PC-3 (cell line): ENCODE measurements at regions of chr12 and their contacts with region 1.

Region 1: GRCh38 chr12:89352492-89353187 is at the start of gene DUSP6:
- DNase-seq: peak; percentile 99
- ATAC-seq: peak; percentile 67
- H3K4me3 ChIP-seq: peak within 1 kb of the TSS; percentile 98
- H3K27ac ChIP-seq: peak within 1 kb of the TSS; percentile 93
- H3K4me1 ChIP-seq: peaks cover 39% of the 10 kb centered on the region
- H3K27me3 ChIP-seq: no peaks in the 10 kb centered on the region
- CTCF ChIP-seq: no peak
- total RNA-seq, gene DUSP6: 184 and 244 TPM in 2 replicates

Region 2: GRCh38 chr12:89179983-89180382 is 172.7 kb before region 1 on chr12:
- CTCF ChIA-PET with region 1: no interaction called
- POLR2A ChIA-PET with region 1: interaction called, 10 read pairs
- intact Hi-C with region 1: no loop called
- DNase-seq: peak; percentile 87
- ATAC-seq: peak; percentile 20; the same call in 1 of the 2 replicates
- H3K4me3 ChIP-seq: no peak overlapping the region
- H3K27ac ChIP-seq: no peak overlapping the region
- H3K4me1 ChIP-seq: peaks cover 37% of the 10 kb centered on the region
- H3K27me3 ChIP-seq: no peaks in the 10 kb centered on the region
- CTCF ChIP-seq: no peak

Region 3: DNA sequence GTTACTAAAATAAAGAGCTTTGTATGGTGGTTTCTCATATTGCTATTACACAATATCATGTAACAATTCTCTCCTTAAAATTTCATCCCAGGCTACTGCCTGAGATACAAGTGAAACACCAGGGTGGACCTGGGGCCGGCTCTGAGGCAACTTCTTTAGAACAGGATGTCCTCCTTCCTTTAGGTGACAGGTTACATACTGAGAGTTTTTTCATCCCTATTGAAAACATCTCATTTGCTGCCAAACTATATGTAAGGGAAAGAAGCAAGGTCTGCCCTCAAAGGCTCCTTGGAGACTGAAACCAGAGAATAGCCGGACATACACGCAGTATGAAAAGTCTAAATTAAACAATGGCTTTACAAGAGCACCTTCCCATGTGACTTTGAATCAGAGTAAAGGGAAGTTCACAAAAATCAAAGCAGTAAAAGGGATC is 140.3 kb before region 1 on chr12:
- CTCF ChIA-PET with region 1: no interaction called
- POLR2A ChIA-PET with region 1: no interaction called
- intact Hi-C with region 1: loop called (anchors 2 kb)
- DNase-seq: peak; percentile 64
- ATAC-seq: peak; percentile 91
- H3K4me3 ChIP-seq: no peak overlapping the region
- H3K27ac ChIP-seq: peak overlapping the region; percentile 59
- H3K4me1 ChIP-seq: peaks cover 29% of the 10 kb centered on the region
- H3K27me3 ChIP-seq: no peaks in the 10 kb centered on the region
- CTCF ChIP-seq: no peak

Region 4: DNA sequence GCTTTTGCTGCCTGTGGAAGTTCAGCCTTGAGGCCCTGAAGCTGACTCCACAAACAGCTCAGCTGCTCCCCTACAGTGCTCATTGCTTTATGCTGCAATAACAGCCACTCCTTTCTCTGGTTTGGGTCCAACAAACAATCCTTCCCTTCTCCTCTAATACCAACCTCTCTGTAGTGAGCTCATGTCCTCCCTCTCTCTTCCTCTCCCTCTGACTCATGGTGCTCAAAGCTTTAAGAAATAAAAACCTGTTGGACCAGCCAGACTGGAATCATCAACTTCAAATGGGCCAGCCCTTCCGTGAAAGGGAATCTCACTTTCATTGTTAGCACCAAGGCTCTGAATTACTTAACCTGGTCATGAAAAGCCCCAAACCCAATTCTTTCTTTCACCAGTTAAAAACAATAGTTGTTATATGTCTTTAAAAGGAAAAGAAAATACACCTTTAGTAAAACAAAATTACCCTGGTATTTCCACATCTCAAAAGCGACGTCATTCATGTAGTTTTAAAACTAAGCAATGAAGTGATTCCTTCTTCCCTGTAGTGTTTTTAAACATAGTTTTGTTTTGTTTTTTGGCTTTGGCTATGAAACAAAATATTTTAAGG is 126.7 kb before region 1 on chr12:
- CTCF ChIA-PET with region 1: interaction called, 3 read pairs
- POLR2A ChIA-PET with region 1: no interaction called
- intact Hi-C with region 1: loop called (anchors 2 kb)
- DNase-seq: peak; percentile 99
- ATAC-seq: peak; percentile 97
- H3K4me3 ChIP-seq: peak overlapping the region; percentile 55
- H3K27ac ChIP-seq: peak overlapping the region; percentile 95
- H3K4me1 ChIP-seq: peaks cover 40% of the 10 kb centered on the region
- H3K27me3 ChIP-seq: no peaks in the 10 kb centered on the region
- CTCF ChIP-seq: no peak

Region 5: DNA sequence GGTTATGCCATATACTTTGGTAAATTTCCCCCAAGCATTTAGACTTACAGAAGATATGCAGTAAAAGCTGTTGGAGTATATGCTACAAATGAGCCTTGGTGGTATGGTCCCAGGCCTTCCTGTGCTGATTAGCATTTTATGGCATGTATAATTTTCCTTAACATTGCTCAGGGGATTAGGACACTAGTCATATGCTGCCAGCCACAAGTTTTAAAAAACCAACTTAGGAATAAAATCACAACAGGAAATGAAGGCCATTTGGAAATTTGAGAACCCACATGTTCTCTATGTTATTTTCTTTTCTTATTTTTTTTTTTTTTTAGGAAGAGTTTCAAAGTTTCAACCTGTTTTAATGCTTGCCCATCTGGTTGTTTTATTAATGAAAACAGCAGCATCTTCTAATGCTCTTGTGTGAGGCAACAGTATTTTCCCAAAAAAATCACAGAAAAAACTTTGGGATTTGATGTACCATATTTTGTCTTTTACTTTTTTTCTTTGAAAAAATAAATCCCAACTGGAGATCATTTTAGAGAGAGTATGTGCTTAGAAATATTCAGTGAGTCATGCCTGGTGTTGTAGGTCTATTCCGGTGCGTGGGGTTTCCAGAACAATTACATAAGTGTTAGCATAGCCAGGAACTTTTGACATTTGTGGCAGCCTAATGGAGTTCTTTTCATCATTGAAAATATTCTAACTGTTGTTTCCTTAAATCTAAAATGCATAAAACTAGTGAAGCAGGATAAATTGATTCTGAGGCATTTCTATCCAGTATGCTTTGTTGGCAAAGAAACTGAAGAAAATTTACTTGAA is 21.3 kb after region 1 on chr12:
- CTCF ChIA-PET with region 1: interaction called, 3 read pairs
- POLR2A ChIA-PET with region 1: interaction called, 6 read pairs
- intact Hi-C with region 1: loop called (anchors 1 kb)
- DNase-seq: peak; percentile 76
- ATAC-seq: peak; percentile 45
- H3K4me3 ChIP-seq: no peak overlapping the region
- H3K27ac ChIP-seq: peak overlapping the region; percentile 92
- H3K4me1 ChIP-seq: peaks cover 77% of the 10 kb centered on the region
- H3K27me3 ChIP-seq: no peaks in the 10 kb centered on the region
- CTCF ChIP-seq: no peak

Region 6: GRCh38 chr12:89417246-89417977 is 64.8 kb after region 1 on chr12:
- CTCF ChIA-PET with region 1: no interaction called
- POLR2A ChIA-PET with region 1: interaction called, 4 read pairs
- intact Hi-C with region 1: loop called (anchors 2 kb)
- DNase-seq: peak; percentile 87
- ATAC-seq: peak; percentile 94
- H3K4me3 ChIP-seq: no peak overlapping the region
- H3K27ac ChIP-seq: peak overlapping the region; percentile 56
- H3K4me1 ChIP-seq: peaks cover 28% of the 10 kb centered on the region
- H3K27me3 ChIP-seq: no peaks in the 10 kb centered on the region
- CTCF ChIP-seq: no peak

Region 7: GRCh38 chr12:89524541-89525285 is 172.1 kb after region 1 on chr12 and contains the start of gene GALNT4:
- CTCF ChIA-PET with region 1: interaction called, 3 read pairs
- POLR2A ChIA-PET with region 1: interaction called, 6 read pairs
- intact Hi-C with region 1: loop called (anchors 2 kb)
- DNase-seq: peak; percentile 90
- ATAC-seq: peak; percentile 69
- H3K4me3 ChIP-seq: peak within 1 kb of the TSS; percentile 91
- H3K27ac ChIP-seq: peak within 1 kb of the TSS; percentile 81
- H3K4me1 ChIP-seq: peaks cover 48% of the 10 kb centered on the region
- H3K27me3 ChIP-seq: no peaks in the 10 kb centered on the region
- CTCF ChIP-seq: peak; percentile 75
- total RNA-seq, gene GALNT4: 6.8 and 8.1 TPM in 2 replicates